Ascending aorta (tissue), 2 donors: ENCODE measurements at regions of chr10 and their contacts with region 1.

Region 1: DNA sequence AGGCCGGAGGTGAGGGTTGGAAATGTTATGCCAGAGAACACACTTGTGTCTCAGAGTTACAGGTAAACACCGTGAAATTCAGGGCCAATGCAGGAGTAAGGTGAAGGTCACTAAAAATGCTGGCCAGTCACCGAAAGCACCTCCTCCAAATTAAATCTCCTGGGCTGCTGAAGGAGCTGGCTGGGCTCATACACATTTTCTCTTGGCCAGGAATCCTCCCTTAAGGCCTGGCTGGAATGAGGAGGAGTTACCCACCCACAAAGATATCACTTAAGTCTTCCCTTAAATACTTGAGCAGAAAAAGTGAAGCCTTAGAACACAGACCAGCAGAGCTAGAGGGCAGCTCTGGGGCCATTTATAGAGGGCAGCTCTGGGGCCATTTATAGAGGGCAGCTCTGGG is 46.3 kb downstream of the HTRA1 start:
- DNase-seq: no peak
- H3K4me3 ChIP-seq: no peak overlapping the region
- H3K27ac ChIP-seq: no peak overlapping the region
- H3K4me1 ChIP-seq: peaks cover 7 to 17% of the 10 kb centered on the region in 2 donors
- H3K27me3 ChIP-seq: no peaks in the 10 kb centered on the region
- CTCF ChIP-seq: no peak

Region 2: DNA sequence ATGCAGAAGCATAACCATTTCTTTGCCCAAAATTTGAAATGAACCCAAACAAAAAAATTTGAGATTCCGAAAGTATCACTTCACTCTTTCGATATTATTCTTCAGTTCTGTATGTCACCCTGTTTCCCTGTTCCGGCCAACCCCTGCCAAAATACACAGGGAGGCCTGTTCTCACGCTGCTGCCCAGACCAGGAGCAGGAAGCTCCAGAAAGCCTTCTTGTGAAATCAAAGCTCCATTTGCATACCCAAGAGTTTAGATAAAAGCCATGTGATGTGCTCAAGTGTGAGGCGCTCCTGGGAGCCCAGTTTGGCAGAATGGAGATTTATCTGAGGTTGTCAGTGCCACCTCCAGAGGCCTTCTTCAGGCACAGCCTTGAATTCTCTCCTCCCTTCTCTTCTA is 1145.6 kb before region 1 on chr10:
- intact Hi-C with region 1: no loop called
- DNase-seq: no peak
- H3K4me3 ChIP-seq: no peak overlapping the region
- H3K27ac ChIP-seq: no peak overlapping the region
- H3K4me1 ChIP-seq: no peaks in the 10 kb centered on the region
- H3K27me3 ChIP-seq: no peaks in the 10 kb centered on the region
- CTCF ChIP-seq: no peak

Region 3: DNA sequence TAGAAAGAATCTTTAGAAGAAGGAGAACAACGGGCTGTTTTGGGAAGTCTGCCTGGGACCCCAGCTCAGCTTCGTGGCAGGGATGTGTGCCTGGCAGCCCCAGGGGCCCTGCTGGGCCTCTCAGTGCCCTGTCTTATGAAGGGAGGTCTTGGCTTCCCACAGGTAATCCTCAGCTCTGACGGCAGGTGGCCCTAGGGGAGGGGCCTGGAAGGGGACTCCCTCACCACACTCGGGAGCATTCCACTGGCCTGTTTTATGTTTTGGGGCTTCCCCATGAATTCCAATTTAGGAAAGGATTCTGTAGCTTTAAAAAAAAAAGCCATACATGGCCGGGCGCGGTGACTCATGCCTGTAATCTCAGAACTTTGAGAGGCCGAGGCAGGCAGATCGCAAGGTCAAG is 49.9 kb after region 1 on chr10:
- intact Hi-C with region 1: loop called (anchors 5 kb)
- DNase-seq: no peak
- H3K4me3 ChIP-seq: no peak overlapping the region
- H3K27ac ChIP-seq: no peak overlapping the region
- H3K4me1 ChIP-seq: no peaks in the 10 kb centered on the region
- H3K27me3 ChIP-seq: no peaks in the 10 kb centered on the region
- CTCF ChIP-seq: no peak